Activated CD4-positive, alpha-beta T cell treated with anti-CD3 and anti-CD28 coated beads for 36 hours (primary cell): ENCODE measurements at regions of chr3 and their contacts with region 1.

Region 1: DNA sequence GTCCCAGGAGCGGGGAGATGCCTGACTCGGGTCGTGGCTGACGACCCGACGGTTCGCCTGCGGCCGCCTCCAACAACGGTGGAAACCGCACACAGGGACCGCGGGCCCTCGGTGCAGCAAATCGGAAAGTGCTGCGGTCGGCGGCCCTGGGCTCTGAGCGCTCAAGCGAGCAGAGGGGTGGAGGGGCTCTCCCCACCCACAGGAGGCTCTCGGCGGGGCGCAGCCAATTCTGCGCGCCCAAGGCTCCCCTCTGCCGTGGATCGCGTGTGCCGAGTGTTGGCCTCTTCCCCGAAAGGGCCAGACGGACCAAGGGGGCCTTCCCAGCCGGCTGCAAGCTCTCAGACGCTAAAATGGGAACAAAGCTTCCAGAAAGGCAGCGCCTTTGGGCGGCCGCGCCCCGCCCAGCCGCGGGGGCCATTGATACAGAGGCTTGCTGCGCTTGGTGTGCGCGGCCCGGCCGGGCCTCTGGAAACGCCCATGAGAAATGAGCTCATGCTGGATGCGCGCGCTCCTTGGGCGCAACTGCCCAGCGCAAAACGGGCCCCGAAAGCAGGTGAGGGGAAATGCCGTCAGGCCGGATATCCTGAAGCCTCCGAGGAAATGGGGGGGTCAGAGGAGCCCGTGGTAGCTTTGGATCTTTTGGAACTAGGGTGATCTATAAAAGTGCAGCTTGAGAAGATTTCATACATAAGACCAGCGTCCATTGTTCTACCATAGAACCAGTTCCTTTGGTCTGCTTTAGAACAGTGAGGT is 1.2 kb upstream of the GSK3B start:
- DNase-seq: peak; percentile 94
- ATAC-seq: peak; percentile 35
- H3K4me3 Mint-ChIP-seq: no peak overlapping the region
- H3K27ac Mint-ChIP-seq: no peak overlapping the region
- H3K4me1 Mint-ChIP-seq: peaks cover 17% of the 10 kb centered on the region
- H3K27me3 Mint-ChIP-seq: no peaks in the 10 kb centered on the region

Region 2: GRCh38 chr3:119293871-119294695 is 801.3 kb before region 1 on chr3 and contains the start of gene ARHGAP31:
- CTCF ChIA-PET with region 1: no interaction called
- POLR2A ChIA-PET with region 1: interaction called, 3 read pairs
- intact Hi-C with region 1: loop called (anchors 1 to 10 kb)
- DNase-seq: peak; percentile 93
- ATAC-seq: peak; percentile 78
- H3K4me3 Mint-ChIP-seq: peak within 1 kb of the TSS; percentile 82
- H3K27ac Mint-ChIP-seq: peak within 1 kb of the TSS; percentile 93
- H3K4me1 Mint-ChIP-seq: peaks cover 52% of the 10 kb centered on the region
- H3K27me3 Mint-ChIP-seq: no peaks in the 10 kb centered on the region
- total RNA-seq, gene ARHGAP31: 9.2 to 9.6 TPM

Region 3: GRCh38 chr3:119469381-119470189 is 625.8 kb before region 1 on chr3:
- CTCF ChIA-PET with region 1: no interaction called
- POLR2A ChIA-PET with region 1: no interaction called
- intact Hi-C with region 1: loop called (anchors 1 to 10 kb)
- DNase-seq: no peak
- ATAC-seq: peak; percentile 47
- H3K4me3 Mint-ChIP-seq: peak overlapping the region; percentile 83
- H3K27ac Mint-ChIP-seq: peak overlapping the region; percentile 90
- H3K4me1 Mint-ChIP-seq: peaks cover 35% of the 10 kb centered on the region
- H3K27me3 Mint-ChIP-seq: no peaks in the 10 kb centered on the region

Region 4: DNA sequence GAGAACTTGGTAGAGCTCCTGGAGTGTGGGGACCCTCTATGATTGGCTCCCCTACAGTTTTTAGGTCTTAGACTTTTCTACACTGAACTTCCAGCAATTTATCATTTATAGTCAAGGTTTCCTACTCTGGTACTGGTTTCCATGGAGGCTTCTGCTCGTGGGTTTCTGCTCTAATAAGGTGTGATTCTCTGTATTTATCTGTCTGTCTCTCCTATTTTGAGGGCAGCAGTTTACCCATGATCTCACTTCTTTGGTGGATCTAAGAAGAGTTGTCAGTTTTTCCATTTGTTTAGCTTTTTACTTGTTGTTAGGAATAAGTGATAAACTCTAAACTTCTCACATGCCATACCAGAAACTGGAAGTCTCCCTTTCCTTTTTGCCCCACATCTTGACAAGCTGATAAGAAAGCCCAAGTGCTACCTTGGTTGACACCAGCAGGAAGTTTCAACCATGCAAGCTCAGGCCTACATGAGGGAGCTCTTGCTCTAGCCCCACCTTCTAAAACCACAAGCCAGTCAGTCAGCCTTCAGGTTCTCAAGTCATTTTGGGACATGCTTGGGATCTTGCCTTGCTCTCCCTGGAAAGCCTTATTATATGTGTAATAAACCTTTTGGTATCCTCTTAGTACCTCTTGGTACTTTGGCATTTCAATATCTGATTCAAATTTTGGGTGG is 587.1 kb before region 1 on chr3:
- CTCF ChIA-PET with region 1: no interaction called
- POLR2A ChIA-PET with region 1: no interaction called
- intact Hi-C with region 1: no loop called
- DNase-seq: peak; percentile 34
- ATAC-seq: peak; percentile 84
- H3K4me3 Mint-ChIP-seq: no peak overlapping the region
- H3K27ac Mint-ChIP-seq: peak overlapping the region; percentile 90
- H3K4me1 Mint-ChIP-seq: peaks cover 36% of the 10 kb centered on the region
- H3K27me3 Mint-ChIP-seq: no peaks in the 10 kb centered on the region

Region 5: DNA sequence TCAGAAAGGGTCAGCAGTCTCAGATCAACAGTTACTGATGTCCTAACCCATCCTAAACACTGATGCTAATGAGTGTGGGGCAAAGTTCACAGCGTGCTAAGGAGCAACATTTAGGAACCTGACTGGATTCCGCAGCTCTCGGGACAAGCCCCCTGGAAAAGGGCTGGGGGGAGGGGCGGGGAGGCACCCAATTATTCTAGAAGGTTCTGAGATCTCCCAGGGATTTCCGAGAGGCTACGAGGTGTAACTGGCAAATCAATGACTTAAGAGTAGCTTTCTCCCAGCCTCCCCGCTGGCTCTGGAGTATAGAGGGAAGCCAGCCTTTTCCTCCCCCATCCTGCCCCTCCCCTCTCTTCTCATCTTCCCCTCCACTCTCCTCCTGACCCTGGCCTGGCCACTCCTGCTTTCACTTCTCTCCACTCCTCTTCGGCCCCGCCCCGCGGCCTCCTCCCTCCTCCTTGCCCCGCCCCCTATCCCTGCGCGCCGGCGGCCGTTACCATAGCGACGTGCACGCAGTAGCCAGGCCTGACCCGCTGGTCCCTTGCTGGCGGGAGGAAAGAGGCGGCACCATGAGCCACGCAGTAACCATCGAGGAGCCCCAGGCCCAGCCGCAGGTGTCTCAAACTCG is 392.8 kb before region 1 on chr3 and contains the start of gene CFAP91:
- CTCF ChIA-PET with region 1: no interaction called
- POLR2A ChIA-PET with region 1: interaction called, 3 read pairs
- intact Hi-C with region 1: loop called in 1 of 2 experiments (anchors 2 kb)
- DNase-seq: peak; percentile 90
- ATAC-seq: peak; percentile 86
- H3K4me3 Mint-ChIP-seq: peak within 1 kb of the TSS; percentile 67
- H3K27ac Mint-ChIP-seq: peak within 1 kb of the TSS; percentile 59
- H3K4me1 Mint-ChIP-seq: peaks cover 39% of the 10 kb centered on the region
- H3K27me3 Mint-ChIP-seq: peaks cover 5% of the 10 kb centered on the region
- total RNA-seq, gene CFAP91: 0.25 to 0.67 TPM

Region 6: GRCh38 chr3:119937229-119937628 is 158.2 kb before region 1 on chr3:
- CTCF ChIA-PET with region 1: interaction called, 6 read pairs
- POLR2A ChIA-PET with region 1: no interaction called
- intact Hi-C with region 1: loop called (anchors 1 to 5 kb)
- DNase-seq: peak; percentile 73
- ATAC-seq: peak; percentile 98
- H3K4me3 Mint-ChIP-seq: peak overlapping the region; percentile 24
- H3K27ac Mint-ChIP-seq: peak overlapping the region; percentile 84
- H3K4me1 Mint-ChIP-seq: peaks cover 37% of the 10 kb centered on the region
- H3K27me3 Mint-ChIP-seq: no peaks in the 10 kb centered on the region

Region 7: DNA sequence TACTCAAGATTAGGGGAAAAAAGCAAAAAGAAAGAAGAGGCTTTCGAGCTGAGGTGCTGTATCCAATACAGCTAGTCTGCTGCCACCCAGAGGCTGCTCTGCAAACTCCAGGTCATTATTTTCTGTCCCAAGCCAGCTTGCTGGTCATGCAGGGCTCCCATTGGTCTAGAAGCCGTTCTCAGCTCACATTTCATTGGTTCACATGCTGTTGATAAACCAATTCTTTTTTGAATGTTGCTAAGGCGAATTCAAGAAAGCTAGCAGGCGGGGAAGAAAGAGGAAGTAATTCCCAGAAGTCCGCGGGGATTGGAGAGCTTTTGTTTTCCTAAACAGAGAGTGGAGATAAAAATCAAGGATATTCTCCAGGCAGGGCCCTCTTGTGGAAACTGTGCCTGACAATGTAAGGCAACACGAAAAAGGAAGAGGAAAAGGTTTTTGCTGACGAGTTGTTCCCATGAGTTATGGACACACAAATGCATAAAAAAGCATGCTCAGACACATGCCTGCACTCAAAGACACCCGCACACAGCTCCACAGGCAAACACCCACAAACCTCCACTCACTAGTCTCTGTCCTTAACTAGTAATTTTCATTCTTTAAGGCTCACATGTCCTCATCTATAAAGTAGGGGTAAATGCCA is 322.0 kb after region 1 on chr3:
- CTCF ChIA-PET with region 1: interaction called, 9 read pairs
- POLR2A ChIA-PET with region 1: no interaction called
- intact Hi-C with region 1: loop called (anchors 5 kb)
- DNase-seq: peak; percentile 93
- ATAC-seq: peak; percentile 99
- H3K4me3 Mint-ChIP-seq: peak overlapping the region; percentile 73
- H3K27ac Mint-ChIP-seq: peak overlapping the region; percentile 52
- H3K4me1 Mint-ChIP-seq: peaks cover 11% of the 10 kb centered on the region
- H3K27me3 Mint-ChIP-seq: peaks cover 4% of the 10 kb centered on the region

Region 8: GRCh38 chr3:121749276-121750086 is 1654.1 kb after region 1 on chr3 and contains the start of gene GOLGB1:
- CTCF ChIA-PET with region 1: no interaction called
- POLR2A ChIA-PET with region 1: no interaction called
- intact Hi-C with region 1: loop called in 1 of 2 experiments (anchors 10 kb)
- DNase-seq: peak; percentile 96
- ATAC-seq: peak; percentile 98
- H3K4me3 Mint-ChIP-seq: no peak within 1 kb of the TSS
- H3K27ac Mint-ChIP-seq: peak within 1 kb of the TSS; percentile 60
- H3K4me1 Mint-ChIP-seq: peaks cover 10% of the 10 kb centered on the region
- H3K27me3 Mint-ChIP-seq: no peaks in the 10 kb centered on the region
- total RNA-seq, gene GOLGB1: 19.0 to 19.5 TPM